ENCODE measurements at regions of chr3 and their contacts with region 1.

Region 1: DNA sequence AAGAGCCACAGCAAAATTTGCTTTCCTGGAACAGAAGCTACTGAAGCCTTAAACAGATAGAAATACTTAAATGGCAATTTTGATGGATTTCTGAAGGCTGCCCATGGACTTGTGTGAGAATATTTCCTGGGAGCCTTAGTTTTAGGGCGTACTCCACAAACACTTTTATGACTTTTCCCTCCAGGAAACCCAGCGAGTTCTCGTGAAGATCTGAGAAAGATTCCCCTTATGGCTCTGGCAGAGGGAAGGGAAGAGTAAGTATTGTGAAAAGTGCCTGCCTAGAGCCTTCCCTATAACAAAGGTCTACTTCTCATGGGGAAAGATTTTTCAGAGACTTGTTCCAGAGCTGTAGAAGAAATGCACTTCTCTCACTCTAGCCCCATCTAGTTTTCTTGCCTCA is 31.1 kb upstream of the TRAT1 start:
- DNase-seq: no peak
- H3K4me3 ChIP-seq: no peak overlapping the region
- H3K27ac ChIP-seq: no peak overlapping the region
- H3K4me1 ChIP-seq: no peaks in the 10 kb centered on the region
- H3K27me3 ChIP-seq: no peaks in the 10 kb centered on the region
- CTCF ChIP-seq: no peak

Region 2: GRCh38 chr3:107384907-107385306 is 1406.6 kb before region 1 on chr3:
- CTCF ChIA-PET with region 1: no interaction called
- POLR2A ChIA-PET with region 1: no interaction called
- intact Hi-C with region 1: no loop called
- DNase-seq: no peak
- H3K4me3 ChIP-seq: no peak overlapping the region
- H3K27ac ChIP-seq: no peak overlapping the region
- H3K4me1 ChIP-seq: no peaks in the 10 kb centered on the region
- H3K27me3 ChIP-seq: no peaks in the 10 kb centered on the region
- CTCF ChIP-seq: no peak

Region 3: GRCh38 chr3:108862865-108863798 is 71.7 kb after region 1 on chr3:
- CTCF ChIA-PET with region 1: no interaction called
- POLR2A ChIA-PET with region 1: no interaction called
- intact Hi-C with region 1: loop called (anchors 10 kb)
- DNase-seq: peak in 1 of 2 experiments; percentile 79
- H3K4me3 ChIP-seq: no peak overlapping the region
- H3K27ac ChIP-seq: peak overlapping the region; percentile 54
- H3K4me1 ChIP-seq: peaks cover 25% of the 10 kb centered on the region
- H3K27me3 ChIP-seq: no peaks in the 10 kb centered on the region
- CTCF ChIP-seq: no peak